GM18951 (cell line): ENCODE measurements at regions of chr6 and their contacts with region 1.

Region 1: DNA sequence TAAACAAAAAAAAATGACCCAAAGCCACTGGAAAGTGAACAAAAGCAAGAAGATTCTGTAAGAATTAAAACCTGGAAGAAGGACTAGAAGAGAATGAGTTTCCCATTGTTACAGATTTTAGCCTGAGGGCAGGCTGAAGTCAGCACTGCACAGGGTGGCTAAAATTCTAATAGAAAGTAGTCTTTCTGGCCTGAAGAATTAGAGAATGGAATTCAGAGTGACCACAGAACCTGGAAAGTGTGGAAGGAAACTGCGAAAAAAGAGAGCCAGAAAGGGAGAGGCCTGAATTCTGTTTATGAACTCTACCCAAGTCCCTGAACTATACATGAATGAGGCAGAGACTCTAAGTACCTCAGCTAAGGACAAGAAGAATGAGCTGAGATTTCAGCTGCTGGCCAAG is 38.9 kb upstream of the FILIP1 start:
- POLR2A ChIP-seq: no peak

Region 2: DNA sequence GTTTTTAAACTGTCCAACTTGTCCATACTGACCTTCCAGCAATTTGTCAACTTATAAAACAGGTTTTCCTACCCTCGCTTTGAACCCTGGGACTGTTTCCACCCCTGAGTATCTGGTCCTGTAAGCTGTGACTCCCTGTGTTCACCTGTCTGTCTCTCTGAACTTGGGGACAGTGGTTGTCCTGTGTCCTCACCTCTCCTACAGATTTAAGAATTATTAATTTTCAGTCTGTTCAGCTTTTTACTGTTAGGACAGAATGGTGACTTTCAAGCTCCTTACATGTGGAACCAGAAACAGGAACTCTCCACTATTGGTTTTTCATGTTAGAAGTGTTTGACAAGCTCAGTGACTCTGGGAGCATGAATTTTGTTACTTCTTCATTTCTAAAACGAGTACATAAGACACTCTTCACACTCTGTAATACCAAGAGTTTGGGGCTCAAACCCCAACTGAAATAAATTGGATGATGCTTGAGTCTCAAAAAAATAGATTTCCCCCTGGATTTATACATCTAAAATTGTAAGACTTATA is 1040.6 kb before region 1 on chr6:
- in situ Hi-C with region 1: no loop called
- POLR2A ChIP-seq: no peak

Region 3: DNA sequence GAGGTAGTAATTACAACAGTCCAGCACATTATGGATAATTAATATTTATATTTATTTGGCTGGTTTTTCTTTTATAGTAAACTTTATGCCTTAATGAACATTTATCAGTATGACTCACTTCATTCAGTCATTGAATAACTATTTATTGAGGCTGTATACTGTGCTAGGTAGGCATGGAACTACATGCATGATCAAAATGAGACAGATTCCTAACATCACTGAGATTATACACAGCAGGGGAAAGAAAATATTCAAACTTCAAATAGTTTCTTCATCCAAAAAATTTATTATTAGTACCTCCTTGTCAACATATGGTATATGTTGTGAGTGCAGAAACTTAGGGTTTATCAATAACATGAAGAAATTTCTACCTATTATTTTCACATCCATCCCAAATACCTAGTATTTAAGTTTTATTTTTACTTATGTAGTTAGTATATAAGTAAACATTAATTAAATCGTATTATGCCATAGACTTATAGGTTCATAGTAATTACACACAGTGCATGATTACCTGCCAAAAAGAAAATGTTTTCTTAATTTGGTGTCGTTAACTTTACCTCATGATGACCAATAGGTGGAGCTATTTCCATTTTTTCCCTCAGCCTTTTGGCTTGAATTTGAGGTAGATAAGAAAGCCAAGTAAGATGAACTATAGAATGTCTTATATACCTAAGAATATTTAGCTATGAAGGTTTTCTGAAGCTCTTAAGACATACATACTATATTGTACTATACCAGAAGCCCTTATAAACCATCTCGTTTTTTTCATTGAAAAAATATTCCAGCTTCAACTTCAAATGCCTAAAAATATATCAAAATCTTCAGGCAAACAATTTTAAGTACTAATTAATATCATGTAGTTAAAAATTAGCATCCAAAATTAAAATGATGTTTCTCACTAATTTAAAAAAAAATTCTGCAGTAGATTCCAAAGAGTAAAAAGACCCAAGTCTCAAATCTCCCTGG is 235.4 kb before region 1 on chr6:
- in situ Hi-C with region 1: loop called (anchors 10 kb)
- POLR2A ChIP-seq: no peak